ENCODE measurements at regions of chr3 and their contacts with region 1.

Region 1: DNA sequence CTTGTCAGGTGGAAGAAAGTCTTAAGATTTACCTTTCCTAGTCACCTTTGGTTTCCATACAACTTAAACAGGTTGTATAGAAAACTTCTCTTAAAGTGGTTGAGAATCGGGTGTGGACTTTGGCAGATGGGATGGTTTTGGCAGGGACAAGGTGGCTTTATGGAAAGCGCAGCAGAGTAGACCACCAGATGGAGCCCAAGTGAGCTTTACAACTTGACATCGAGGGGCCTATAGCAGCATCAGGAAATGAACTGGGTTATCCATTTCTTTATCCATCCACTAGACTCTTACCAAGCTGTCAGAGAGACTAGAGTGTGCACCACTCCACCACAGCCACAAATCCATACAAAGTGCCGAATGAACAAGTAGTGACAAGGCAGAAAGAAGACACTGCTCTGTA is 85.3 kb upstream of the MBNL1 start:
- DNase-seq: peak; percentile 23 to 51
- ATAC-seq: peak; percentile 48 to 88
- H3K4me3 ChIP-seq: no peak overlapping the region
- H3K27ac ChIP-seq: no peak overlapping the region
- H3K4me1 ChIP-seq: peaks cover 0 to 9% of the 10 kb centered on the region in 2 donors
- H3K27me3 ChIP-seq: no peaks in the 10 kb centered on the region
- CTCF ChIP-seq: peak; percentile 43 to 73 (median 66)
- POLR2A ChIP-seq: no peak

Region 2: DNA sequence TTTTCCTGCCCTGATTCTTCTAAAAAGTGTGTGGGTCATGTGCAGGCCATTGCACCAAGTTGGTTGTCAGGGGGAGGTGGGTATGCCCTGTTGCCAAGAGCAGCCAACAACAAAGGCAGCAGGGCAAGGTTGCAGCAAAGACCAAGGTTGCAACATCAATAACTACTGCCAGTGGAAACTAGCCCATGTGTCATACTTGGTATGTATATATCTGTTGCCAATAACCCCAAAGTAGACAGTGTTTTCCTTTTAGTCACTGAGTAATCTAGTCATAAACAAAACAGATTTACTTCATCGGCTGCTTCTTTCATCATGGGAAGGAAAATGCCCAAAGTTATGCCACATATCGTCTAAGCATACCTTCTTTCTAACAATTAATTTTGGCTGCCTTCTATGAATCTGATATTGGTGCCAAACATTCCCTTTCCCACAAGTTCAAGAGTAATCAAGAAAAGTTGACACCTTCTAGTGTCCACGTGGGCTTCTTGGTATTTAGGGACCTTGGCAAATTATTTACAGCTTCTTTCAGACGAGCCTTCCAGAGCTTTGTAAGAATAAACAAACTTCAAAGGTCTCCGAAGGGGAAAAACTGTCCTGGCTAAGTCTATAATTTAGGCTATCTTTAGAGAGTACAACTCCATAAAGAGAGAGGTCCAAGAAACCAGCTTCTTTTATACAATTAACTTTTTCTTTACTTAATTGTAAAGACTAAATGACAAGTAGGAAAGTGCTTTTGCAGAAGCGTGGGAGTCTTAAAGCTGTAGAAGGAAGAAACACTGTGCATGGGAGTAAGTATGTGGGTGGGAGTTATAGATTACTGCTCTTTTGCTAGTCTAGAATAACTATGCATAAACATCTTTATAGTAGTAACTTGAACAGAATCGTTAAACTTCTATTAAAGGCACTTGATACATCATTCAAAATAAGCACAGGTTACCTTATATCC is 75.2 kb after region 1 on chr3:
- in situ Hi-C with region 1: no loop called
- intact Hi-C with region 1: loop called (anchors 5 kb)
- DNase-seq: peak; percentile 68 to 75
- ATAC-seq: peak; percentile 91 to 97
- H3K4me3 ChIP-seq: peak overlapping the region in 3 of 4 donors; percentile 22 to 34 (median 28)
- H3K27ac ChIP-seq: peak overlapping the region; percentile 76 to 88 (median 80)
- H3K4me1 ChIP-seq: peaks cover 13 to 23% of the 10 kb centered on the region in 2 donors
- H3K27me3 ChIP-seq: no peaks in the 10 kb centered on the region
- CTCF ChIP-seq: peak in 1 of 5 experiments; percentile 19
- POLR2A ChIP-seq: no peak

Region 3: DNA sequence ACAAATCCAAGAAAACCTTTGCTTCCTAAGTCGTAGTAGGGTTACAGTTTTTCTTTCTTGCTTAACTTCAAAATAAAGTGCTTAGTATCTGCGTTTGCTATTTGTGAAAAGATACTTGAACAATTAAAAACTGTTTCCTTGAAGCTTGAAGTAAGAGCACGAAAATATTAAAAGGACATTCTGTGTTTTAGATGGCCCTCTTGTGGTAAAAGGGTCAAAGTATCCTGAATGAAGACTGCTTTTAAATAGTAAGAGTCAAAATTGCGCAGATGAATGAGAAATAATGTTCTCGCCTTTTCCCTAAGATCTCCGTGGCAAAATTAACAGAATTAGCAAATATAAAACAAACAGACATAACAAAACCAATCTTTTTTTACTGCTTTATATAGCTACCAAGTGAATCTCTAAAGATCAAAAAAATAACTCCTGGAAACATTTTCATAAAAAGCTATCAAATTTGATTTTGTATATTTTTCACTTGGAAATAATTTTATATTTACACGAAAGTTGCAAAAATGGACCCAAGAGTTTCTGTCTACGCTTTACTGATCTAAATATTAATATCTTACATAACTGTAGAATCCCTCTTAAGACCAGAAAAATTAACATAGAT is 260.7 kb after region 1 on chr3:
- in situ Hi-C with region 1: loop called in 2 of 4 experiments (anchors 10 kb)
- intact Hi-C with region 1: loop called (anchors 5 kb)
- DNase-seq: no peak
- ATAC-seq: peak; percentile 51 to 56
- H3K4me3 ChIP-seq: peak overlapping the region in 1 of 4 donors; percentile 19
- H3K27ac ChIP-seq: peak overlapping the region; percentile 53 to 71 (median 62)
- H3K4me1 ChIP-seq: peaks cover 70 to 72% of the 10 kb centered on the region in 2 donors
- H3K27me3 ChIP-seq: no peaks in the 10 kb centered on the region
- CTCF ChIP-seq: peak; percentile 59 to 82 (median 68)
- POLR2A ChIP-seq: no peak

Region 4: DNA sequence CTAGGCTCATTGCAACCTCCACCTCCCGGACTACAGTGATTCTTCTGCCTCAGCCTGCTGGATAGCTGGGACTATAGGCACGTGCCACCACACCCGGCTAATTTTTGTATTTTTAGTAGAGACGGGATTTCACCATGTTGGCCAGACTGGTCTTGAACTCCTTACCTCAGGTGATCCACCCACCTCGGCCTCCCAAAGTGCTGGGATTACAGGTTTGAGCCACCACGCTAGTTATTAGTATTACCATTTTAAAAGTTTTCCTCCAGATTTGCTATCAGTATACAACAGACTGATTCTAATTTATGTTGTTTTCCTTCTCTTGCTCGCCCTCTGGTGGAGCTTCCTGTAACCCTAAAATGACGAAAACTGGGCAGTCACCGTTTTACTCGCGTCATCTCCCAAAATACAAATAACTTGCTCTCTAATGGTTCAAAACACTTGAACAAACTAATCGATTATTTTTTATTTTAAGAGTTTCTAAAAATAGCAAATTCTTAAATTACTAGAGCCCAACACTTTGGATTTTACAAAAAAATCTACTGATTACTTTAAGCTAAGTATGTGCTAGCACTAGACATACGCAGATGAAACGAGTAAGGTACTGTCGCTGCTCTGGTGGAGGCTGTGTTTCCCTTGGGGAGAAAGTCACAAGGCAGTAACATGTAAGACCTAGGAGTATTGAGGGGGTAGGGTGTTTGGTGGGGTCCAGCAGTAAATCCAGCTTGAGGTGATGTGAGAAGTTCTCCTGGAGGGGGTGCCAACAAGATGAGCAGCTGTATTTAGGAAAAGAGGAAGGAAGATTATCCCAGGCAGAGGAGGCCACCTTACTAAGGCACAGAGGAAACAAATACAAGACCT is 288.6 kb after region 1 on chr3:
- in situ Hi-C with region 1: loop called in 1 of 4 experiments (anchors 25 kb)
- intact Hi-C with region 1: loop called (anchors 2 kb)
- DNase-seq: peak; percentile 32 to 52
- ATAC-seq: peak; percentile 62 to 63
- H3K4me3 ChIP-seq: peak overlapping the region in 2 of 4 donors; percentile 13 to 31
- H3K27ac ChIP-seq: peak overlapping the region; percentile 34 to 62 (median 53)
- H3K4me1 ChIP-seq: peaks cover 13% of the 10 kb centered on the region in 2 donors
- H3K27me3 ChIP-seq: no peaks in the 10 kb centered on the region
- CTCF ChIP-seq: peak; percentile 72 to 78 (median 76)
- POLR2A ChIP-seq: no peak

Measured in gastrocnemius medialis (tissue), 4 donors.